ENCODE measurements at regions of chr17 and their contacts with region 1.

Region 1: DNA sequence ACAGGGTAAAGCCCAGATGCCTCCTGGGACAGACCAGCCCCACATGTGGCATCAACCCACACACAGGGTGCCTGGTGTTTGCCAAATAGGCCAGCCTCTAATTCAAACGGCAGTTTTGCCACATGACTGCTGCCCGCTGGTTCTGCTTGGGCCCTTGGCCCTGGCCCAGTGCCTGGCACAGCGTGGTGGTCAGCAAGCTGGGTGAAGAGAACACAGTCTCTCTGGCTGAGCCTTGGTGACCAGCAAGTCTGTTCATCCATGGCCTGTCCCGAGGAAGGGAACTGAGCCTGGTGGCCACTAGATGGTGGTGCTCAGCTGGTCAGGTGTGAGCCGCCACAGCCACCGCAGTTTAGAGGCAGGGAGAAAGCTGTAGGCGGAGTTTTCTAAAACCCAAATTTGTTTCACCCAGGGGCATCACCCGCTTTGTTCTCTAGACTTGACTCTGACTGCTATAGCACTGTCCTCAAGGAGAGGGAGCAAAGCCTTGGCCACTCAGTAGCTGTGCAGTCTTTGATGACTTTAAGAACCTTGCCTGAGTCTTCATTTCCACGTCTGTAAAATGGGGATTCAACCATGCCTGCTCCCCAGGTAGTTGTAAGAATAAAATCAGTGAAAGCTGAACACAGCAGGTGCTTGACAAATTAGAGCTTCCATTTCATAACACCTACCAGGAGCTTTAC is 4.7 kb upstream of the GFAP start:
- DNase-seq: peak; percentile 81
- ATAC-seq: peak; percentile 84
- H3K4me3 Mint-ChIP-seq: no peak overlapping the region
- H3K27ac Mint-ChIP-seq: peak overlapping the region; percentile 32; the same call in 1 of the 2 replicates
- H3K4me1 Mint-ChIP-seq: peaks cover 20% of the 10 kb centered on the region
- H3K27me3 Mint-ChIP-seq: peaks cover under 1% of the 10 kb centered on the region; the same call in 1 of the 2 replicates
- CTCF ChIP-seq: no peak; the same call in 1 of the 2 replicates

Region 2: GRCh38 chr17:44940321-44940720 is 20.3 kb after region 1 on chr17:
- CTCF ChIA-PET with region 1: interaction called, 13 read pairs
- POLR2A ChIA-PET with region 1: interaction called, 3 read pairs
- DNase-seq: no peak
- ATAC-seq: no peak
- H3K4me3 Mint-ChIP-seq: no peak overlapping the region
- H3K27ac Mint-ChIP-seq: peak overlapping the region; percentile 71
- H3K4me1 Mint-ChIP-seq: peaks cover 13% of the 10 kb centered on the region
- H3K27me3 Mint-ChIP-seq: no peaks in the 10 kb centered on the region
- CTCF ChIP-seq: no peak

Region 3: DNA sequence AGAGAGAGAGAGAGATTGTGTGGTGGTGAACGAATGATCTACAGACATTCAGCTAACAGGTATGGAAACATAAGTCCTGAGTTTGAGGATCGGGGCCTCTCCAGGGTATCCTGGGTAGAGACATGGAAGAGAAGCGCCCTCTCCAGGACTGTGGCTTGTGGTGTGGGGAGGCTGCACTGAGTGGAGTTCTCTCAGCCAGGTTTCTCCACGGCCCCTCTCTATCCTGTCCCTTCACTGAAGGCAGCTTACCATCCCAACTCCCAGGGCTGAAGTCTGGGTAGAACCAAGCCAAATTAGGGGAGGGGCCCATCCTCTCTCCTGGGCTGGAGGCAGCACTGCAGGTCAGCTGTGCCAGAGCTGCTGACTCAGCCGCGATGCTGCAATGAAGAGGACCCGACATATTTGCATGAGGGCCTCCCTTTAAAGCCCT is 41.9 kb after region 1 on chr17:
- CTCF ChIA-PET with region 1: interaction called, 76 read pairs
- POLR2A ChIA-PET with region 1: no interaction called
- DNase-seq: peak; percentile 54
- ATAC-seq: peak; percentile 85
- H3K4me3 Mint-ChIP-seq: no peak overlapping the region
- H3K27ac Mint-ChIP-seq: no peak overlapping the region
- H3K4me1 Mint-ChIP-seq: peaks cover 12% of the 10 kb centered on the region
- H3K27me3 Mint-ChIP-seq: peaks cover 58% of the 10 kb centered on the region
- CTCF ChIP-seq: no peak

Region 4: DNA sequence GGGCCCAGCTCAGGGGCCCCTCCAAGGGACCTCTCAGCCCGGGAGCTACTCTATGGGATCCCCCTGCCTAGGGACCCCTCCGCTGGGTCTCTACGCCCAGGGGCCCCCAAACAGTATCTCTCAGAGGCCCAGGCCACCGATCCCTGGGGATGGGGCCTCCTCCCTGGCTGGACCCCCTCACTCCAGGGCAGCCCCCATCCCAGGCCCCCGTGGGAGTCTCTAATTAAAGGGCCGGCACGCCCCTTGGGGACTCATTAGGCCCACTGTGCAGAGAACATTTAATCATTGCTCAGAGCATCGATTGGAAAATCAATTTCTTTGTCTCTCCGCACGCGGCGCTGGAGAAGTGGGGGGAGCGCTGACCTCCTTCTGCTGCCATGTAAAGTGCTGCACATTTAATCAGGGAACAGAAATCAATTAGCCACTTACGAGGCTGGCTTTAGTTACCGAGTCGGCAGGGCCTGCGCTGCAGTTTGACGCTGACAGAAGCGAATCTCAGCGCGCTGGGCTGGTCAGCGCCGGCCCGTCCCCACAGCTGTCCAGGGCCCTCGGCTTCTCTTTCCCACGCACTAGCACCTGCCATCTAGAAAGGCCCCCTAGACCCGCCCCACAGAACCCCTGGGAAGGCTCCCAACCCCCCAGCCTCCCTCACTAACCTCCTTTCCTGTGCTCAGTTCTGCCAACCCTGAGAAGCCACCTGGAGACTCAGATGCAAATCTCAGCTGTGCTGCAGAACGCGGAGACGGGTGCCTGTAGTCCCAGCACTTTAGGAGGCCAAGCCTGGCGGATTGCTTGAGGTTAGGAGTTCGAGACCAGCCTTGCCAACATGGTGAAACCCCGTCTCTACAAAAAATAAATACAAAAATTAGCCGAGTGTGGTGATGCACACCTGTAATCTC is 68.3 kb after region 1 on chr17:
- CTCF ChIA-PET with region 1: interaction called, 25 read pairs
- POLR2A ChIA-PET with region 1: no interaction called
- DNase-seq: peak; percentile 33
- ATAC-seq: peak; percentile 4
- H3K4me3 Mint-ChIP-seq: peak overlapping the region; percentile 67
- H3K27ac Mint-ChIP-seq: peak overlapping the region; percentile 79
- H3K4me1 Mint-ChIP-seq: peaks cover 34% of the 10 kb centered on the region
- H3K27me3 Mint-ChIP-seq: peaks cover 9% of the 10 kb centered on the region
- CTCF ChIP-seq: no peak

Region 5: GRCh38 chr17:45021607-45022287 is 101.7 kb after region 1 on chr17:
- CTCF ChIA-PET with region 1: interaction called, 177 read pairs
- POLR2A ChIA-PET with region 1: interaction called, 4 read pairs
- DNase-seq: peak; percentile 72
- ATAC-seq: peak; percentile 62
- H3K4me3 Mint-ChIP-seq: peak overlapping the region; percentile 66
- H3K27ac Mint-ChIP-seq: no peak overlapping the region
- H3K4me1 Mint-ChIP-seq: peaks cover 28% of the 10 kb centered on the region
- H3K27me3 Mint-ChIP-seq: peaks cover 42% of the 10 kb centered on the region
- CTCF ChIP-seq: peak; percentile 85